ENCODE measurements at regions of chr1 and their contacts with region 1.

Region 1: GRCh38 chr1:159891275-159892157 is 8.4 kb downstream of the CFAP45 start:
- DNase-seq: peak; percentile 82 to 90
- ATAC-seq: peak; percentile 95 to 99
- H3K4me3 ChIP-seq: no peak overlapping the region
- H3K27ac ChIP-seq: peak overlapping the region in 1 of 2 experiments; percentile 54; a peak in 1 of 6 replicates
- H3K4me1 ChIP-seq: peaks cover 11% of the 10 kb centered on the region; the same call in 2 of the 3 replicates
- CTCF ChIP-seq: peak; percentile 100
- EP300 ChIP-seq: no peak
- POLR2A ChIP-seq: no peak
- RAD21 ChIP-seq: peak; percentile 100

Region 2: GRCh38 chr1:159132271-159132881 is 759.1 kb before region 1 on chr1:
- CTCF ChIA-PET with region 1: interaction called, 54 read pairs
- POLR2A ChIA-PET with region 1: no interaction called
- DNase-seq: peak; percentile 59 to 61
- ATAC-seq: peak; percentile 68 to 81; a peak in 3 of 6 replicates
- H3K4me3 ChIP-seq: no peak overlapping the region
- H3K27ac ChIP-seq: no peak overlapping the region
- H3K4me1 ChIP-seq: no peaks in the 10 kb centered on the region
- CTCF ChIP-seq: peak; percentile 88
- EP300 ChIP-seq: no peak
- POLR2A ChIP-seq: no peak
- RAD21 ChIP-seq: peak; percentile 84 to 85

Region 3: DNA sequence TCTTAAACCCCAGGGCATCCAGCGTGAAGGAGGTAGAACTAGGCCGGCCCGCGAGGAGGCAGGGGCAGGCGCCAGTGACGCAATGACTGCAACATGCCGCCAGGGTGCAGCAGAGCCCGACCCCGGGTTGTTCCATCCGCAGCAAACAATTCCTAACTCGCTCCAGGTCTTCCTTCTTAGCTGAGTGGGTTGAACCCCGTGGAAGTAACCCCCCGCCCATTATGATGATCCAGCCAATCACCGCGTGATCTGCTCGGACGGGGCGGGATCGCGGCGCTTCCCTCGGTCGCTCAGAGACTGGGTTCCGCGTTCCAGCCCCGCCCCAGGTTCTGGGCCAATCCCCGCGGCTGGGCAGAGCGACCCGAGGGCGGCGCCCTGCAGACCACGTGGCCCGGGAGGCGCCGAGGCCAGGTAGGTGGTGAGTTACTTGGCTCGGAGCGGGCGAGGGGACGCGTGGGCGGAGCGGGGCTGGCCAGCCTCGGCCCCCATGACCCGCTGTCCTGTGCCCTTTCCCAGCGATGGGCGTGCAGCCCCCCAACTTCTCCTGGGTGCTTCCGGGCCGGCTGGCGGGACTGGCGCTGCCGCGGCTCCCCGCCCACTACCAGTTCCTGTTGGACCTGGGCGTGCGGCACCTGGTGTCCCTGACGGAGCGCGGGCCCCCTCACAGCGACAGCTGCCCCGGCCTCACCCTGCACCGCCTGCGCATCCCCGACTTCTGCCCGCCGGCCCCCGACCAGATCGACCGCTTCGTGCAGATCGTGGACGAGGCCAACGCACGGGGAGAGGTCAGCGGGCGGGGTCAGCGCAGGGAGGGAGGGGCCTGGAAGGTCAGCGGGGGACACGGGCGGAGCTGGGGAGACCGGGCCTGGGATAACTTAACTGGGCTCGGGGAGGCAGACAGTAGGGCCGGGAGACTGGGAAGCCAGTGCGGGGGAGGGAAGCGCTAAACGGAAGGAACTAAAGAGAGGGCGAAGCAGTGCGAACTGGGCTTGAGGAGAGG is 110.6 kb before region 1 on chr1 and contains the start of gene DUSP23:
- CTCF ChIA-PET with region 1: interaction called, 142 read pairs
- POLR2A ChIA-PET with region 1: no interaction called
- DNase-seq: peak; percentile 97 to 98
- ATAC-seq: peak; percentile 96 to 99
- H3K4me3 ChIP-seq: peak within 1 kb of the TSS; percentile 64
- H3K27ac ChIP-seq: peak within 1 kb of the TSS; percentile 80 to 89
- H3K4me1 ChIP-seq: peaks cover 9% of the 10 kb centered on the region; the same call in 2 of the 3 replicates
- CTCF ChIP-seq: peak; percentile 89
- EP300 ChIP-seq: no peak
- POLR2A ChIP-seq: peak; percentile 51; the same call in 1 of the 2 replicates
- RAD21 ChIP-seq: peak; percentile 83 to 90
- polyA plus RNA-seq, gene DUSP23: 32.3 and 35.2 TPM in 2 replicates

Region 4: DNA sequence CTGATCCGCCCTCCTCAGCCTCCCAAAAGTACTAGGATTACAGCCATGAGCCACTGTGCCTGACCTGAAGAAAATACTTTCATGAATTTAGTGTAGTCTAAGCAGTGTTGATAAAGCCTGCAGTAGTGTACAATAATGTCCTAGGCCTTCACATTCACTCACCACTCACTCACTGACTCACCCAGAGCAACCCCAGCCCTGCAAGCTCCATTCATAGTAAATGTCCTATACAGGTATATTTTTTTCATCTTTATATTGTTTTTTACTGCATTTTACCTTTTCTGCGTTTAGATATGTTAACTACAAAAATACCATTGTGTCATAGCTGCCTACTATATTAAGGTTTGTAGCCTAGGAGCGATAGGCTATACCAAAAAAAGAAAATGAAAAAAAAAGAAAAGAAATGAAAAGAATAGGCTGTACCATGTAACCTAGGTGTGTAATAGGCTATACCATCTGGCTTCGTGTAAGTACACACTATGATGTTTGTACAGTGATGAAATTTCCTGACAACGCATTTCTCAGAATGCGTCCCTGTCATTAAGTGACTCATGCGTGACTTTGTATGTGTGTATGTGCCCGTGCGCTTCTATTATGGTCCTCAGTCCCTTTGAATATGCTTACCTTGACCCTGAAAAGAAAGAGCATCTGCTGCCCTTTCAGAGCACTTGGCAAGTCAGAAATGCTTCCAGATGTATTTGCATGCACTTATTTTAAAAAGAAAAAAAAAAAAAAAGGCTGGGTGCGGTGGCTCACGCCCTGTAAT is 74.1 kb before region 1 on chr1:
- CTCF ChIA-PET with region 1: interaction called, 23 read pairs
- POLR2A ChIA-PET with region 1: no interaction called
- DNase-seq: peak in 1 of 2 experiments; percentile 58
- ATAC-seq: peak; percentile 70 to 79; a peak in 5 of 6 replicates
- H3K4me3 ChIP-seq: no peak overlapping the region
- H3K27ac ChIP-seq: no peak overlapping the region
- H3K4me1 ChIP-seq: peaks cover 4% of the 10 kb centered on the region; the same call in 1 of the 3 replicates
- CTCF ChIP-seq: no peak
- EP300 ChIP-seq: no peak
- POLR2A ChIP-seq: no peak
- RAD21 ChIP-seq: no peak

Region 5: DNA sequence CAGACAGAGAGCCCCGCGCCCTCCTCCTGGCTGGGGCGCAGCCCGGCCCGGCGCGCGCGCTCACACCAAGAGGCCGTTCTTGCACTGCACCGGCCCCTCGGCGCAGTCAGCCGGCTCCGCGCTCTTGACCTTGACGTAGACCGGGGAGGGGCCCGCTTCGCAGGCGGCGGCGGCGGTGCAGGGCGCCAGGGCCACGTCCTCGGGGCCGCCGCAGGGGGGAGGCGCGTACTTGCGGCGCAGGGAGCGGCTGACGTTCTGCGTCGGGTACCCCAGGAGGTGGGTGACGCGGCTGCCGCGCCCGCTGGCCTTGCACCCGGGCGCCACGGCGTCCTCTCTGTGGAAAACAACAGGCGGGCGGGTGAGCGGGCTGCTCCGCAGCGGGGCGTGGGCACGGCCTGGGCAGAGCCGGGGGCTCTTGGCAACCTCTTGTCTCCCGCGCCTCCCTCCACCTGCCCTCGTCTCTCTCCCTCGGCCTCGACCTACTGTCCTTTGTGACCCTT is 36.8 kb before region 1 on chr1:
- CTCF ChIA-PET with region 1: interaction called, 126 read pairs
- POLR2A ChIA-PET with region 1: interaction called, 3 read pairs
- DNase-seq: peak; percentile 60 to 81
- ATAC-seq: peak; percentile 90 to 93
- H3K4me3 ChIP-seq: peak overlapping the region; percentile 59
- H3K27ac ChIP-seq: peak overlapping the region; percentile 86 to 93
- H3K4me1 ChIP-seq: peaks cover 18% of the 10 kb centered on the region
- CTCF ChIP-seq: no peak
- EP300 ChIP-seq: no peak
- POLR2A ChIP-seq: peak; percentile 47
- RAD21 ChIP-seq: peak in 1 of 2 experiments; percentile 23; a peak in 2 of 5 replicates

Region 6: DNA sequence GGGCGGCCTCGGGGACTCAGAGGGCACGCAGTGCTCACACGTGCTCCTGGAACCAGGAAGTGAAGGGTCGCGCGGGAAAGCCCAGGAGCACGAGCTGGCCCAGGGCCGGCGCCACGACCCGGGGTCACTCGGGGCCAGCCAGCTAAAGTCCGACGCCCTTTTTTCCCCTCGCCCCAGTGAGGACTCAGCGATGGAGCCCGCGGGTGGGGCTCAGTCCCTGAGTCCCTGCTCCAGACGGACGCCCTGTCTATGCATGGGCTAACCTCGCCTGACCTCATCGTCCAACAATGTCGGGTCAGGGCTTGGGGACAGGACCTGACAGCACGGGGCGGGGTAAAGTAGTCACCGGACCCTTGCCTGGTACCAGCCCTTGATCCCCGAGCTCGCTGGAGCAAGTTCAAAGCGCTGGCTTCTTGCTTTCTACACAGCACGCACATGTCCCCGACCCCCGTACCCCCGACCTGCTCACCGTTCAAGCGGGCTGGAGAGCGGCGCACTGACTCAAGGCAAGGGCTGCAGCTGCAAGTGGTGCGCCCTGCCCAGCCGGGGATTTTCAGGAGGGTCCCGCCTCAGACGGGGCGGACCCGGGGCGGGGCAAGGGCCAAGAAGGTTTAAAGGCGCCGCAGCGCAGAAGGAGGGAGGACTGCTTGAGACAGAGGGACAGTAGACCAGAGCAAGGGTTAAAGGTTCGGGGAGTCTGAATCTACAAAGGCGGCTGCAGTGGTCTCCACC is 33.6 kb after region 1 on chr1 and contains the start of gene TAGLN2:
- CTCF ChIA-PET with region 1: interaction called, 67 read pairs
- POLR2A ChIA-PET with region 1: no interaction called
- DNase-seq: peak; percentile 92 to 96
- ATAC-seq: peak; percentile 67 to 84
- H3K4me3 ChIP-seq: peak within 1 kb of the TSS; percentile 87
- H3K27ac ChIP-seq: peak within 1 kb of the TSS; percentile 97 to 99
- H3K4me1 ChIP-seq: peaks cover 40% of the 10 kb centered on the region
- CTCF ChIP-seq: no peak
- EP300 ChIP-seq: no peak
- POLR2A ChIP-seq: peak; percentile 96
- RAD21 ChIP-seq: no peak
- polyA plus RNA-seq, gene TAGLN2: 533 and 536 TPM in 2 replicates

Region 7: GRCh38 chr1:159970932-159971342 is 79.4 kb after region 1 on chr1:
- CTCF ChIA-PET with region 1: no interaction called
- POLR2A ChIA-PET with region 1: no interaction called
- DNase-seq: peak in 1 of 2 experiments; percentile 58
- ATAC-seq: peak; percentile 60 to 85; a peak in 5 of 6 replicates
- H3K4me3 ChIP-seq: no peak overlapping the region
- H3K27ac ChIP-seq: no peak overlapping the region
- H3K4me1 ChIP-seq: peaks cover 14% of the 10 kb centered on the region
- CTCF ChIP-seq: no peak
- EP300 ChIP-seq: no peak
- POLR2A ChIP-seq: no peak
- RAD21 ChIP-seq: no peak

Measured in A549 (cell line).